GM12878 (cell line): ENCODE measurements at regions of chr3 and their contacts with region 1.

Region 1: DNA sequence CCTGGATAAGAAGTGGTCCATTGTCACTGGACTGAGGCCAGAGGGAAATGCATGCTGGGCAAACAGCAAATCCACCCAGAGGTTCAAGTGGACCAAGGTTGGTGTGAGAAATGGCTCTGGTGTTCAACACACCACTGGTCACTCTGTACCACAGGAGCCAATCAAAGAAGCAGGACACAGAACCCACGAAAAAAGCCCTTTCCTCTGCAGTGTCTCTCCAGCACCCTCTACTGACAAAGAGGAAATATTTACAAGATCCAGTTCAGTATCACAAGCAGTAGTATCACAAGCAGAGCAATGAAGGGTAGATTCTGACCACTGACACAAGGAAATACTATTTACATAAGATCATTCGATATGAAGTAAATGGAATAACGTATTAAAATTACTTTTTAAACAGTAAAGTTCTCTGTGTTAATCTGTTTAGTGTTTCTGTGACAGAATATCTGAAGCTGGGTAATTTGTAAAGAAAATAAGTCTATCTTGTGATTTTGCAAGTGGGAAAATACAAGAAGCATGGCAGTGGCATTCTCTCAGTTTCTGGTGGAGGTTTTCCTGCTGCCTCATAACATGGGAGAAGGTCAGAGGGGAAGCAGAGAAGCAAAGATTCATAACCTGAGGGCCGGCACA is 390.7 kb downstream of the EFHB start:
- DNase-seq: peak; percentile 25
- ATAC-seq: peak; percentile 76
- H3K4me3 ChIP-seq: no peak overlapping the region
- H3K27ac ChIP-seq: 0 out of 2 replicates have a peak overlapping the region, but pooled peaks have one; percentile 47
- H3K4me1 ChIP-seq: peaks cover 46% of the 10 kb centered on the region
- H3K27me3 ChIP-seq: no peaks in the 10 kb centered on the region
- CTCF ChIP-seq: peak; percentile 79 to 83 (median 81)
- EP300 ChIP-seq: no peak
- POLR2A ChIP-seq: no peak
- RAD21 ChIP-seq: peak; percentile 92

Region 2: DNA sequence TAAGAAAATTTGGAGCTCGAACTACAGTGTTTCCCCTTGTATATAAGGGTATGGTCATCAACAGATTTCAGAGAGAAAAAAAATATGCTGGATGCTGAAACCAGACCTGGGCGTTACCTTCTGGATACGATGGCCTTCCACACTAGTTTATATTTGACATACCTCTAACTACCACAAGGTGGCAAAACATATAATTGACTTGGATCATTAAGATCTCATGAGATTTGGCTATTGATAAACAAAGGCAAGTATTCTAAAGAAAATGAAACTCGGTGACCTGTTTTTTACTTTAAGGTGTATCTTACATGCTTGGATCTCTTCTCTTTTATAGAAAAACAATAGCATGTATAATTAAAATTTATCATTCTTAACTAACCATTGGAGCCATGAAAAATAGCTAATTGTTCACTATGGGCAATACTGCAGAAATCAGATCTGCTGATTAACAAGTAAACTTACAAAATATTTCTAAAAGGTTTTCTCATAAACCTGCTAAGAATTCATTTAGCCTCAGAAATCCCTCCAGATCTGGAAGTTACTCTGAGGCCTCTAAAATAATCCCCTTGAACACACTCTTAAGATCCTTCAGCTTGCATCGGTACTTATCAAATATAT is 695.6 kb before region 1 on chr3:
- CTCF ChIA-PET with region 1: no interaction called
- POLR2A ChIA-PET with region 1: no interaction called
- RAD21 ChIA-PET with region 1: no interaction called
- SMC1A ChIA-PET with region 1: no interaction called
- in situ Hi-C with region 1: no loop called
- intact Hi-C with region 1: loop called (anchors 5 kb)
- DNase-seq: no peak
- ATAC-seq: peak; percentile 79
- H3K4me3 ChIP-seq: no peak overlapping the region
- H3K27ac ChIP-seq: no peak overlapping the region
- H3K4me1 ChIP-seq: no peaks in the 10 kb centered on the region
- H3K27me3 ChIP-seq: no peaks in the 10 kb centered on the region
- CTCF ChIP-seq: peak; percentile 39 to 42 (median 42); a peak in 4 of 6 replicates
- EP300 ChIP-seq: no peak
- POLR2A ChIP-seq: no peak
- RAD21 ChIP-seq: peak; percentile 35; the same call in 1 of the 2 replicates

Region 3: DNA sequence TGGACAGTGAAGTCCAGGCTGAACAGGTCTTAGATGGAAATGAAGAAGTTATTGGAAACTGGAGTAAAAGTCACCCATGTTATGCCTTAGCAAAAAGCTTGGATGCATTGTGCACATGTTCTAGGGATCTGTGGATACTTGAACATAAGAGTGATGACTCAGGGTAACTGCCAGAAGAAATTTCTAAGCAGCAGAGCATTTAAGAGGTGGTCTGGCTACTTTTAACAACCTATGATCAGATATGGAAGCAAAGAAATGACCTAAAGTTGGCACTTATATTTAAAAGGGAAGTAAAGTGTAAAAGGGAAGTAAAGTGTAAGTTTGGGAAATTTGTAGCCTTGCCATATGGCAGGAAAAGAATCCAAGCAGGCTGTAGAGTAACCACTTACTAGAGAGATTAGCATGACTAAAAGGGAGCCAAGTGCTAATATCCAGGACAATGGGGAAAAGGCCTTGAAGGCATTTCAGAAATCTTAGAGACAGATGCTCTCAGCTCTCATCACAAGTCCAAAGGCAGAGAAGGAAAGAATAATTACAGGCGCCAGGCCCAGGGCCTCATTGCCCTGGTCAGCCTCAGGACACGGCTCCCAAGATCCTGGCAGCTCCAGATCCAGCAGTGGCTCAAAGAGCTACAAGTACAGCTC is 468.9 kb before region 1 on chr3:
- CTCF ChIA-PET with region 1: no interaction called
- POLR2A ChIA-PET with region 1: no interaction called
- RAD21 ChIA-PET with region 1: no interaction called
- SMC1A ChIA-PET with region 1: no interaction called
- in situ Hi-C with region 1: no loop called
- intact Hi-C with region 1: no loop called
- DNase-seq: no peak
- ATAC-seq: no peak
- H3K4me3 ChIP-seq: no peak overlapping the region
- H3K27ac ChIP-seq: no peak overlapping the region
- H3K4me1 ChIP-seq: no peaks in the 10 kb centered on the region
- H3K27me3 ChIP-seq: no peaks in the 10 kb centered on the region
- CTCF ChIP-seq: no peak
- EP300 ChIP-seq: no peak
- POLR2A ChIP-seq: no peak
- RAD21 ChIP-seq: no peak

Region 4: GRCh38 chr3:19213601-19214220 is 329.6 kb before region 1 on chr3:
- CTCF ChIA-PET with region 1: interaction called, 3 read pairs
- POLR2A ChIA-PET with region 1: no interaction called
- RAD21 ChIA-PET with region 1: interaction called, 3 read pairs
- SMC1A ChIA-PET with region 1: no interaction called
- in situ Hi-C with region 1: no loop called
- intact Hi-C with region 1: loop called (anchors 1 kb)
- DNase-seq: no peak
- ATAC-seq: peak; percentile 69
- H3K4me3 ChIP-seq: no peak overlapping the region
- H3K27ac ChIP-seq: no peak overlapping the region
- H3K4me1 ChIP-seq: no peaks in the 10 kb centered on the region
- H3K27me3 ChIP-seq: no peaks in the 10 kb centered on the region
- CTCF ChIP-seq: peak; percentile 24 to 35 (median 26); a peak in 3 of 6 replicates
- EP300 ChIP-seq: no peak
- POLR2A ChIP-seq: no peak
- RAD21 ChIP-seq: peak; percentile 55

Region 5: DNA sequence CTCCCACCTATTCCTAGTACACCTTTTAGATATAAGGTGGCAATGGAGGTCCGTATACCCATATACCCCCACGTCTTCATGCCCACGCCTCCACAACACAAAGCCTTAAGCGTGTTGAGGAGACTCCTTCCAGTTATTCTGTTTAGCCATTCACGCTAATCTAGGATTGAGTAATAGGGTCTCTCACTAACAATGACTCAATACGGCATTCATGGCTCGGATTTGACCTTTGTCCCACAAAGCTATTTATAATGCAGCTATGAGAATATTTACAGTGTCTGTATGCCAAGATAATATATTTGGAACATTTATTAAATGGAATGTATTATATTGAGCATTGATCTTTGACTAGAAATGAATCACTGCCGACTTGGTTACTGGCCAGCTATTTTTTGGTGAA is 179.2 kb before region 1 on chr3:
- CTCF ChIA-PET with region 1: no interaction called
- POLR2A ChIA-PET with region 1: no interaction called
- RAD21 ChIA-PET with region 1: interaction called, 6 read pairs
- SMC1A ChIA-PET with region 1: no interaction called
- in situ Hi-C with region 1: no loop called
- intact Hi-C with region 1: loop called (anchors 5 kb)
- DNase-seq: no peak
- ATAC-seq: no peak
- H3K4me3 ChIP-seq: no peak overlapping the region
- H3K27ac ChIP-seq: no peak overlapping the region
- H3K4me1 ChIP-seq: peaks cover 8% of the 10 kb centered on the region
- H3K27me3 ChIP-seq: no peaks in the 10 kb centered on the region
- CTCF ChIP-seq: no peak
- EP300 ChIP-seq: no peak
- POLR2A ChIP-seq: no peak
- RAD21 ChIP-seq: no peak

Region 6: DNA sequence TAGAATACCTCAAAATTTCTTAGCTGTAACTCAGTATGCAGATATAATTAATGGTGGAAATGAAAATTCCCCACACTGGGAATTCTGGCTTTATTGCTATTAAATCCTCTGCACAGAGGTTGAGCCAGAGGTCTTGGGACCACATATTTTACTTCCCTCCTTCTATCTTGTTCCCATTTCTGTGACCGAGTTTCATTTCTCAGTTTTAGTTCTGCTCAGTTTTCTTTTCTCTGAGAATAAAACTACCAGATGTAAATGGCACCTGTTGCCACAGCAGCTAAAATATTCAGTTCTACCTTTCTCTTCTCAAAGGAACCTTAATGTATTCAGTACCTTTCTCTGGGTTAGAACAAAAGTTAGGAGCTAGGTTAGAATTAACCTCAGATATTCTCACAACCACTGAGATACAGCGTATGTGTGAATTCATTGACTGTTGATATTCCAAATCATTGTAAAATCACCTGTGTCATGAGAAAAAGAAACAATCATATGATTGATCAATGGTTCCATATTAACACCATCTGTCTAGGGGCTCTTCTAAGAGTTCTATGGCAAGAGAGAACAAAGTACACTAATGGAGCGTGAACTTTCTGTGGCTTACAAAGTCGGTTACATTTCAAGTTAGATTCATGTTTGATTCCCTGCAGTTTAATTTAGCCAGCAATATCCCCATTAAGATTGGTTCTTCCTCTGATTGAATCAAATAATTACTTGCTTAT is 16.6 kb after region 1 on chr3:
- CTCF ChIA-PET with region 1: interaction called, 3 read pairs
- POLR2A ChIA-PET with region 1: no interaction called
- RAD21 ChIA-PET with region 1: no interaction called
- SMC1A ChIA-PET with region 1: interaction called, 5 read pairs
- in situ Hi-C with region 1: no loop called
- intact Hi-C with region 1: loop called (anchors 2 kb)
- DNase-seq: peak; percentile 58
- ATAC-seq: peak; percentile 94
- H3K4me3 ChIP-seq: peak overlapping the region; percentile 51
- H3K27ac ChIP-seq: peak overlapping the region; percentile 85
- H3K4me1 ChIP-seq: peaks cover 16% of the 10 kb centered on the region
- H3K27me3 ChIP-seq: no peaks in the 10 kb centered on the region
- CTCF ChIP-seq: no peak
- EP300 ChIP-seq: peak in 1 of 2 experiments; percentile 34; a peak in 1 of 4 replicates
- POLR2A ChIP-seq: no peak
- RAD21 ChIP-seq: no peak